Dendritic cell treated with granulocyte-macrophage colony-stimulating factor and Interleukin-4, amounts not matched to agents 40 ng/mL and 50 ng/mL, for 4 days (primary cell): ENCODE measurements at regions of chr1 and their contacts with region 1.

Region 1: GRCh38 chr1:164716992-164717703 is 158.2 kb downstream of the PBX1 start:
- H3K4me3 Mint-ChIP-seq: peak overlapping the region; percentile 54
- H3K27ac Mint-ChIP-seq: peak overlapping the region; percentile 83
- H3K4me1 Mint-ChIP-seq: peaks cover 66% of the 10 kb centered on the region
- H3K27me3 Mint-ChIP-seq: peaks cover 53% of the 10 kb centered on the region

Region 2: GRCh38 chr1:164558461-164559341 is 158.4 kb before region 1 on chr1 and contains the start of gene PBX1:
- intact Hi-C with region 1: loop called (anchors 10 kb)
- H3K4me3 Mint-ChIP-seq: peak within 1 kb of the TSS; percentile 69
- H3K27ac Mint-ChIP-seq: no peak within 1 kb of the TSS
- H3K4me1 Mint-ChIP-seq: peaks cover 7% of the 10 kb centered on the region
- H3K27me3 Mint-ChIP-seq: peaks cover 33% of the 10 kb centered on the region

Region 3: DNA sequence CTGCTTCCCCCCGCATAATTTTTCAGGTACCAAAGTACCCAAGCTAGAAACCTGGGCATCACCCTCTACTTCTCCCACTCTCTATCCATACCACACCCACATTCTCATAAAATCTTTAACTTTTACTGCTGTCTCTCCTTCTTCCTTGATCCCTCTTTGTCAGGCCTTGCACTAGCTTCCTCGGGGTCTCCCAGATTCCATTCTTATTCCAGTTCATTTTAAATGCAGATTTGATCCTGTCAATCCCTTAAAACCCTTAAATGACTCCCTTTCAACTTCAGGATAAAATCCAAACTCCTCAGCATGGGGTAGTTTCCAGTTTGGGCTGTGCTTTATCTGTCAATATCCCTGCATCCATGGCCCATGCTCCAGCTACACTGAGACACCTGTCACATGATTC is 185.3 kb after region 1 on chr1:
- intact Hi-C with region 1: no loop called
- H3K4me3 Mint-ChIP-seq: no peak overlapping the region
- H3K27ac Mint-ChIP-seq: no peak overlapping the region
- H3K4me1 Mint-ChIP-seq: no peaks in the 10 kb centered on the region
- H3K27me3 Mint-ChIP-seq: no peaks in the 10 kb centered on the region

Region 4: DNA sequence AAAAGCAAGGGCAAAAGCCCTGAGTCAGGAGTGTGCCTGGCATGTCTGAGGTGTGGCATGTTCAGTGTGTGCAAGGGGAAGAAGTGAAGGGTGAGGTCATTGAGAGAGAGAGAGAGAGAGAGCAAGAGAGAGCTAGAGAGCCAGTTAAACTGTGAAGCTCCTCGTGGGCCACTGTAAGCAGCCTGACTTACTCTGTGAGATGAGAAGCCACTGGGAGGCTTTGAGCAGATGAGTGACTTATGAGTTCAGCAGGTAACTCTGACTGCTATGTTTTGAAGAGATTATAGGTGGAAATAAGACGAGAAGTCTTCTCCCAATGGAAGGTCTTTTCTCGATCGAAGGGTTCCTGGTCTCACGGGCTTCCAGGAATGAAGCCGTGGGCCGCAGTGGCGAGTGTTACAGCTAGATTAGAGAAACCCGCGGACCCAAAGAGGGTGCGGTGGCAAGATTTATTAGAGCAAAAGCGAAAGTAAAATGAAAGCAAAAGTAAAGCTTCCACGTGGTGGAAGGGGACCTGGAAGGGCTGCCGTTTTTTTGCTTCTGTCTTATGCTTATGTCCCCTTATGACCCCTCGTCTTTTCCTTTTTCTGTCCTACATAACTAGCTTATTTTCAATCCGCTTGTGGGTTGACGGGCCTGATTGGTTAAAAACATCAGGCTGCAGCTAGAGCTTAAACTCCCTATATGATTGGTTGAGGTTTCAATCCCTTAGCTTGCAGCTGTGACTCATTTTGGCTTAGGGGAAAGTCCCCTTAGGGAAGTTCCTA is 1772.7 kb after region 1 on chr1:
- intact Hi-C with region 1: no loop called
- H3K4me3 Mint-ChIP-seq: no peak overlapping the region
- H3K27ac Mint-ChIP-seq: no peak overlapping the region
- H3K4me1 Mint-ChIP-seq: peaks cover 6% of the 10 kb centered on the region
- H3K27me3 Mint-ChIP-seq: no peaks in the 10 kb centered on the region